Gastrocnemius medialis (tissue), 4 donors: ENCODE measurements at regions of chr7 and their contacts with region 1.

Region 1: DNA sequence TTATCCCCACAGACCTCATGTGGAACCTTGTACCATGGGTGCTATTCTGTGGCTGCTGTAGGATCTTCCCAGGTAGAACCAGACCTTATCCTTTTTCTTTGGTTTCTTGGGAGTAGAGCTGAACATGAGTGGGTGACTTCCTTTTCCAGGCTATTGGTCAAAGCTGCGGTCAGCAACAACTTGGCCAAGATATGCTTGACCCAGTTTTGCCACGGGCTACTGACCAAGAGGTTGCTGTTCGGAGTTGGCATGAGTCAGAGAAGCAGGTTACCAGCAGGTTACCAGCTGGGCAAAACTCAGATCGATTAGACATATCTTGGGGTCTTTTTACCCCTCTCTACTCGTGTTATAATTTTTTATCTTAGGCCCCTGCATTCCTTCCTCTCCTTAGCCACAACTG is 36.7 kb upstream of the HDAC9 start:
- DNase-seq: peak; percentile 51 to 70
- ATAC-seq: peak; percentile 99
- H3K4me3 ChIP-seq: peak overlapping the region in 1 of 4 donors; percentile 5
- H3K27ac ChIP-seq: peak overlapping the region in 3 of 4 donors; percentile 24 to 45 (median 43)
- H3K4me1 ChIP-seq: peaks cover 20 to 21% of the 10 kb centered on the region in 2 donors
- H3K27me3 ChIP-seq: no peaks in the 10 kb centered on the region
- CTCF ChIP-seq: no peak
- POLR2A ChIP-seq: no peak

Region 2: GRCh38 chr7:18570890-18571478 is 112.2 kb after region 1 on chr7:
- in situ Hi-C with region 1: no loop called
- intact Hi-C with region 1: loop called (anchors 10 kb)
- DNase-seq: no peak
- ATAC-seq: peak; percentile 52 to 63
- H3K4me3 ChIP-seq: no peak overlapping the region
- H3K27ac ChIP-seq: no peak overlapping the region
- H3K4me1 ChIP-seq: peaks cover 14% of the 10 kb centered on the region in 2 donors
- H3K27me3 ChIP-seq: no peaks in the 10 kb centered on the region
- CTCF ChIP-seq: peak in 4 of 5 experiments; percentile 36 to 62 (median 38)
- POLR2A ChIP-seq: no peak